Panc1 (cell line): ENCODE measurements at regions of chr10 and their contacts with region 1.

Region 1: GRCh38 chr10:97327348-97328294 is 6.9 kb downstream of the FRAT2 start:
- DNase-seq: no peak
- ATAC-seq: peak; percentile 81
- H3K4me3 ChIP-seq: no peak overlapping the region
- H3K27ac ChIP-seq: peak overlapping the region; percentile 81
- H3K4me1 ChIP-seq: peaks cover 72% of the 10 kb centered on the region
- H3K27me3 ChIP-seq: no peaks in the 10 kb centered on the region
- CTCF ChIP-seq: no peak

Region 2: DNA sequence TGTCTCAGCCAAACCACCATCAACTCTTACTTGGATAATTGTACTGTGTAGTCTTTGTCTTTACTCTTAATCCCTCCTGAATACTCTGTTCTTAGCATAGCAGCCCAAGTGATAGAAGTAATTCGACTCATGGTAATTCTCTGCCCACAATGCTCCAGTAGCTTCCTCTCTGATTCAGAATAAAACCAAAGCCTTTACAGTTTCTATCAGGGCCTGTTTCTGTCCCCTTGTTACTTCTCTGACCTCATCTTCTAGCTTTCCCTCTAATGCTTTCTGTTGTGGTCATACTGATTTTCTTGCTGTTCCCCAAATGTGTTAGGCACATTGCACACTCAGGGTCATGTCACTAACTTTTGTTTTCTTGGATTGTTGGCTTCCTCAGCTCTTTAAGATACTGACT is 1189.5 kb before region 1 on chr10:
- CTCF ChIA-PET with region 1: no interaction called
- POLR2A ChIA-PET with region 1: no interaction called
- in situ Hi-C with region 1: no loop called
- intact Hi-C with region 1: no loop called
- DNase-seq: no peak
- ATAC-seq: no peak
- H3K4me3 ChIP-seq: no peak overlapping the region
- H3K27ac ChIP-seq: no peak overlapping the region
- H3K4me1 ChIP-seq: no peaks in the 10 kb centered on the region
- H3K27me3 ChIP-seq: no peaks in the 10 kb centered on the region
- CTCF ChIP-seq: no peak

Region 3: GRCh38 chr10:97270523-97271154 is 57.0 kb before region 1 on chr10:
- CTCF ChIA-PET with region 1: interaction called, 13 read pairs
- POLR2A ChIA-PET with region 1: no interaction called
- in situ Hi-C with region 1: no loop called
- intact Hi-C with region 1: loop called (anchors 5 kb)
- DNase-seq: no peak
- ATAC-seq: no peak
- H3K4me3 ChIP-seq: no peak overlapping the region
- H3K27ac ChIP-seq: 0 out of 2 replicates have a peak overlapping the region, but pooled peaks have one; percentile 29
- H3K4me1 ChIP-seq: peaks cover 7% of the 10 kb centered on the region
- H3K27me3 ChIP-seq: no peaks in the 10 kb centered on the region
- CTCF ChIP-seq: no peak

Region 4: DNA sequence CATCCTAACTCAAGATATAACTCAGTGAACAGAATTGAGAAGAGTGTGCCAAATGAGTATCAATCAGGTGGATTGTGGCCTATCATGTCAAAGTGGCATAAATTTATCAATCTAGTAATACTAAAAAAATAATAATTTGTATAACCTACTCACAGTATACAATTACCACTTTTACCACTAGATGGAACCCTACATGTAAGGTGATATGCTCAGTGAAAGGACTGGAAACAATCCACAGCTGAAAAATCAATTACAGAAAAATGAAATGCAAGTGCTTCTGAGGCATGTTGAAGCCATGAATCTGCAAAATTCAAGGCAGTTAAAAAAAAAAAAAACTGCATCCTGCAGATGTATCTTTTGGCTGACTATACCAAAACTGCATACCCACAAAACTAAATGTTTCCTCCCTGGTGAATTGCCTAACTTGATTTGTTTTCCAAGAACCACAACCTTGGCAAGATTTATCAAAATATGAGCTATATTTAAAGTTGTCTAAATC is 49.1 kb before region 1 on chr10:
- CTCF ChIA-PET with region 1: interaction called, 26 read pairs
- POLR2A ChIA-PET with region 1: interaction called, 10 read pairs
- in situ Hi-C with region 1: no loop called
- intact Hi-C with region 1: loop called (anchors 5 kb)
- DNase-seq: peak; percentile 78
- ATAC-seq: peak; percentile 77
- H3K4me3 ChIP-seq: no peak overlapping the region
- H3K27ac ChIP-seq: peak overlapping the region; percentile 86
- H3K4me1 ChIP-seq: peaks cover 53% of the 10 kb centered on the region
- H3K27me3 ChIP-seq: no peaks in the 10 kb centered on the region
- CTCF ChIP-seq: peak; percentile 77; the same call in 1 of the 2 replicates

Region 5: DNA sequence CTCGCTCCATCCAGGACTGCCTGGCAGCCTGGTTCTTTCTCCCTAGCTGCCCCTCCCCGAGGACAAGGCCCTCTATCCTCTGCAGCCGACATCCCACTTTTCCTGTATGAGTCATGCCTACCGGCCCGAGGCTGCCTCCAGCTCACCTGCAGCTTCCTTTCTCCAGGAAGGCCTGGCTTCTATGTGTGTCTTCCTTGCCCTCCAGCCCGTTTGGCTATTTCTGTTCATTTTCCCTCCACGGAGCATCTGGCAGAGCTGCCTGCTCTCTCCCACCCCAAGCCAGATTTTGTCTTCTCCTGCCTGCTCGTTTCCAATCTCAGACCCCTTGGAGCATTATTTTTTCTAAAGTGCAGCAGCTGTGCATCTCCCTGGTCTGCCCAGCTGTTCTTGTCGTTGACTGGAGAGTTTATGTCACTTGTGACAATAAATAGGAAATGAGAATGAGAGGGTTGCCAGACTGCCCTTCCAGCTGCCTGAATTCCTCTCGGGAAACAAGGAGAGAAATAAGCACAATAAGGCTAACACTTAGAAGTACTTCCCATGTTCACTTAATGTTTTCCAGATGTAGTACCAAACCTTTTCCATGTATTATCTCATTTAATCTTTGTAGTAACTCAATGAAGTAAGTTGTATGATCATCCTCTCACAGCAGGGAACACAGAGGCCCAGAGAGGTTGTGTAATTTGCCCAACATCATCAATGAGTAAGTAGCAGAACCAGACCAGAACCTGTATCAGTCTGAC is 190.9 kb after region 1 on chr10:
- CTCF ChIA-PET with region 1: no interaction called
- POLR2A ChIA-PET with region 1: no interaction called
- in situ Hi-C with region 1: no loop called
- intact Hi-C with region 1: no loop called
- DNase-seq: no peak
- ATAC-seq: peak; percentile 69
- H3K4me3 ChIP-seq: no peak overlapping the region
- H3K27ac ChIP-seq: peak overlapping the region; percentile 69
- H3K4me1 ChIP-seq: peaks cover 23% of the 10 kb centered on the region
- H3K27me3 ChIP-seq: no peaks in the 10 kb centered on the region
- CTCF ChIP-seq: no peak